IMR-90 (cell line): ENCODE measurements at regions of chr5 and their contacts with region 1.

Region 1: GRCh38 chr5:109485030-109485429 is 75.3 kb upstream of the PJA2 start:
- DNase-seq: no peak
- ATAC-seq: no peak; the same call in 1 of the 2 replicates
- H3K4me3 ChIP-seq: no peak overlapping the region
- H3K27ac ChIP-seq: no peak overlapping the region
- H3K4me1 ChIP-seq: no peaks in the 10 kb centered on the region
- H3K27me3 ChIP-seq: peaks cover 8% of the 10 kb centered on the region
- CTCF ChIP-seq: no peak
- POLR2A ChIP-seq: no peak
- RAD21 ChIP-seq: no peak

Region 2: DNA sequence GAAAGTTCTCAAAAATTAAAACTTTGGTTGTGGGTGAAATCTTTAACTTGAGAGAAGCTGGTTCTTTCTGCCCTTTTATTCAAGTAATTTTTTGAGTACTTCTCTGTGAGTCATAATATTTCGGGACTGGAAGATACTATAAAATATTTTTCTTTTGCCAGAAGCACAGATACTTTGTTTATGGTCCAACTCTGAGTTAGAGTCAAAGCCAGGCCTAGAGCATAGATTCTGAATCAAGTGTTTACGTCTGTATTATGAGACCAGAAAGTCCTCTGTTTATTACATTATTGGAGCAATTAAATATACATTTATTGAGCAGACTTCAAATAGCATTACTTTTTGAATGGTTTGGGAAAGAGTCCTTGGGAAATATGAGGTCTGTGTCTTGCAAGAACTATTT is 549.4 kb before region 1 on chr5:
- CTCF ChIA-PET with region 1: no interaction called
- POLR2A ChIA-PET with region 1: no interaction called
- dilution Hi-C with region 1: no loop called
- in situ Hi-C with region 1: no loop called
- intact Hi-C with region 1: no loop called
- DNase-seq: peak; percentile 56
- ATAC-seq: peak; percentile 76
- H3K4me3 ChIP-seq: no peak overlapping the region
- H3K27ac ChIP-seq: no peak overlapping the region
- H3K4me1 ChIP-seq: no peaks in the 10 kb centered on the region
- H3K27me3 ChIP-seq: no peaks in the 10 kb centered on the region
- CTCF ChIP-seq: no peak
- POLR2A ChIP-seq: no peak
- RAD21 ChIP-seq: no peak

Region 3: GRCh38 chr5:109256486-109256885 is 228.5 kb before region 1 on chr5:
- CTCF ChIA-PET with region 1: no interaction called
- POLR2A ChIA-PET with region 1: no interaction called
- dilution Hi-C with region 1: no loop called
- in situ Hi-C with region 1: no loop called
- intact Hi-C with region 1: no loop called
- DNase-seq: no peak
- ATAC-seq: no peak
- H3K4me3 ChIP-seq: no peak overlapping the region
- H3K27ac ChIP-seq: no peak overlapping the region
- H3K4me1 ChIP-seq: no peaks in the 10 kb centered on the region
- H3K27me3 ChIP-seq: no peaks in the 10 kb centered on the region
- CTCF ChIP-seq: no peak
- POLR2A ChIP-seq: no peak
- RAD21 ChIP-seq: no peak

Region 4: DNA sequence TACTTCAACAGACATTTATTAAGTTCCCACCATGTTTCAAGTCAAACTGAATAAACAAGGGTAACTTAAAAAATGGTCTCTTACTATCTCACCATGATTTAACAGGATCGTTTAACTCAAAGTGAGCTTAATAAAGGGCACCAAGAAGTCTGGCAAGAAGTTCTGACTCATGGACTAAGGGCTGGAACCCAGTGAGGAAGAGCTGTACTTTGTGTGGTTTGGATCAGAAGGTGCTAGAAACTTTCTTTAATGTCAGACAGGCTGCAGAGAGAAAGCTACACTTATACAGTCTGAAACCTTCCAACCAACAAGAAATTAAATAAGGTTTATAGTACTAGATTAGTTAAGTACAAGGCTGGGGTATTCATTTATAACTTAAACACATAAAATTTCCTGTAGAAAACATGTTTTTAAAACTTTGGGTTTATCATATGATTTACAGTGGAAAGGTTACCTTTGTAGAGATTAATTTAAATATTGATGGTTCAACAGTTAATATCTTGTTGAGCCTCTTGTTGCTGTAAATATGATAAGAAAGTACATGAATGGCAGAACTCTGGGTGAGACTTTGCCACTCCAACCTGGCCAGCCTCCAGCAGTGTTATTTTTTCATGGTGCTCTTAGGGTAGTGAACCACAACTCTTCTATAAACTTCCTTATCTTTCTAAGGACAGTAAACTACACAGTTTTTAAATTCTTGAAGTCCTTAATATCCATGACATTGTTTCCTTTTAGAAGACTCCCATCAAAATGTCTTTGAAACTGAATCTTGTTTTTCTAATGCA is 367.5 kb after region 1 on chr5:
- CTCF ChIA-PET with region 1: no interaction called
- POLR2A ChIA-PET with region 1: no interaction called
- dilution Hi-C with region 1: no loop called
- in situ Hi-C with region 1: no loop called
- intact Hi-C with region 1: loop called (anchors 10 kb)
- DNase-seq: peak; percentile 25
- ATAC-seq: peak; percentile 63; the same call in 1 of the 2 replicates
- H3K4me3 ChIP-seq: no peak overlapping the region
- H3K27ac ChIP-seq: no peak overlapping the region
- H3K4me1 ChIP-seq: no peaks in the 10 kb centered on the region; the same call in 1 of the 2 replicates
- H3K27me3 ChIP-seq: no peaks in the 10 kb centered on the region
- CTCF ChIP-seq: no peak
- POLR2A ChIP-seq: no peak
- RAD21 ChIP-seq: no peak

Region 5: GRCh38 chr5:109945097-109945678 is 460.2 kb after region 1 on chr5:
- CTCF ChIA-PET with region 1: no interaction called
- POLR2A ChIA-PET with region 1: no interaction called
- dilution Hi-C with region 1: no loop called
- in situ Hi-C with region 1: no loop called
- intact Hi-C with region 1: no loop called
- DNase-seq: no peak
- ATAC-seq: no peak
- H3K4me3 ChIP-seq: no peak overlapping the region
- H3K27ac ChIP-seq: no peak overlapping the region
- H3K4me1 ChIP-seq: no peaks in the 10 kb centered on the region
- H3K27me3 ChIP-seq: peaks cover 2% of the 10 kb centered on the region
- CTCF ChIP-seq: no peak
- POLR2A ChIP-seq: no peak
- RAD21 ChIP-seq: no peak